Sigmoid colon (tissue), 7 donors: ENCODE measurements at regions of chr14 and their contacts with region 1.

Region 1: DNA sequence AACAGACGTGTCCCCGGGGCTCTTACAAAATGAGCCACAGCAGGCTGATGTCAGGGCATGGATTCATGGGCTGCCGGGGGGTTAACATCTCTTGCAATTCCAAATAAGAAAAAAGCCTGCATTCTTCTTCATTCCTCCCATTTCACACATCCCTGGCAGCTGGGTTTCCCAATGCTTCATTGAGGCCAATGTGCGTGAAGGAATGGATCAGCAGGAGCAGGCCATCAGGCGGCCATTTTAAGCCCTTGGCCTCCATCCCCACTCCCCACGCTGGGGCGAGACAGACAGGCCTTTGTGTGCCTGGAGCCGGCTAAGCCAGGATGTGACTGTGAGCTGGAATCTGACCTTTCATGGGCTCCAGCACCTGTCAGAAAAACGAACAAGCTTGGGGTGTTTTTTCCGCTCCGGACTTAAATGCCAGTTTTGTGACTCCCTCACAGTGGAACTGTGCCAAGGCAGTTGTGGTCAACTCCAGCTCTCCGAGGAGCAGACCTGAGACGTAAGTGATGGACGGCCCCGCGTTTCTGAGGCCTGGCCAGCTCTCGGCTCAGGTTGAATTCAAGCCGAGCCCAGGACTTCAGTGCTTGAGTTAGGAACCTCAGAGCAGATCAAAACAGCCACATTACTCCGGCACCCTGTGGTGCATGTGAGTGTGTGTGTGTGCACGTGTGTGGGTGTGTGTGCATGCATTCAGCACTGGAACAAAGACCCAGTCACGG is 133.1 kb downstream of the TMEM30B start:
- DNase-seq: peak; percentile 70
- H3K4me3 ChIP-seq: no peak overlapping the region
- H3K27ac ChIP-seq: peak overlapping the region; percentile 36 to 78 (median 52)
- H3K4me1 ChIP-seq: peaks cover 0 to 28% (median 20%) of the 10 kb centered on the region in 4 donors
- H3K27me3 ChIP-seq: no peaks in the 10 kb centered on the region
- CTCF ChIP-seq: no peak
- EP300 ChIP-seq: no peak
- POLR2A ChIP-seq: no peak

Region 2: DNA sequence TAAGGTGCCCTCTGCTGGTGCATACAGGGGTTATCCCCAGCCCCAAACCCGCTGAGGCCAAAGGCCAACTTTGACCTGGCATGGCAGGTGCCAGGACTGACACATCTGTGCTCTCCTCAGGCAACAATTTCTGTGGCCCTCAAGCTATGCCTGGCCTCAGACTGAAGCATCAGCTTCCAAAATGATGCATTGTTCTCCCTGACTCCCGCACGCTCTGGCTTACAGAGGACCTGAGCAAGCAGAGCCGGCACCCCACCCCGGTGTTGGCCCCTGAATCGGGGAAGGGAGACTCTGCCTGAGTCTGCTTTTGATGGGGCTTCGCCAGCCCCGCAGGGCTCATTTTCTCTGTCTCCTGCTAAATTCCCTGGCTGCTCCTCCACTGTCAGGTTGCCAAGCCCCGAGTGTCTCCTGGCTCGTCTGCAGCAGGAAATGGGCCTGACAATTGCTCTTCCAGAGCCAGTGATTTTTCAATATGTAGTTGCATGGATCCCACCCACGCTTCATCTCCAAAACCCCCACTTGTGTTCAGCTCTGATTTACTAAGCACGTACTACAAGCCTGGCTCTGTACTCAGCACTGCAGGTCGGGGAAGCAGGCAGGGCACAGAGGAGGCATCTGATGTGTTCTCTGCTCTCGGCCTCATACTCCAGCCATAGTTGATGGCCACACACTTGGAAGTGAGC is 40.9 kb before region 1 on chr14:
- intact Hi-C with region 1: loop called (anchors 5 kb)
- DNase-seq: peak; percentile 80
- H3K4me3 ChIP-seq: no peak overlapping the region
- H3K27ac ChIP-seq: no peak overlapping the region
- H3K4me1 ChIP-seq: peaks cover 0 to 38% (median 35%) of the 10 kb centered on the region in 4 donors
- H3K27me3 ChIP-seq: peaks cover 0 to 15% (median 4%) of the 10 kb centered on the region in 3 donors
- CTCF ChIP-seq: no peak
- EP300 ChIP-seq: no peak
- POLR2A ChIP-seq: no peak